Activated CD4-positive, alpha-beta T cell treated with anti-CD3 and anti-CD28 coated beads, Interleukin-2, amount 10 ng/mL, durations not matched to agents 24 days and 14 days (primary cell): ENCODE measurements at regions of chr1 and their contacts with region 1.

Region 1: GRCh38 chr1:94417978-94418663 is at the start of gene ABCD3:
- DNase-seq: peak; percentile 99
- H3K4me3 Mint-ChIP-seq: no peak within 1 kb of the TSS
- H3K27ac Mint-ChIP-seq: peak within 1 kb of the TSS; percentile 81
- H3K4me1 Mint-ChIP-seq: peaks cover 18% of the 10 kb centered on the region
- H3K27me3 Mint-ChIP-seq: peaks cover 15% of the 10 kb centered on the region
- total RNA-seq, gene ABCD3: 29.9 and 31.1 TPM in 2 replicates

Region 2: DNA sequence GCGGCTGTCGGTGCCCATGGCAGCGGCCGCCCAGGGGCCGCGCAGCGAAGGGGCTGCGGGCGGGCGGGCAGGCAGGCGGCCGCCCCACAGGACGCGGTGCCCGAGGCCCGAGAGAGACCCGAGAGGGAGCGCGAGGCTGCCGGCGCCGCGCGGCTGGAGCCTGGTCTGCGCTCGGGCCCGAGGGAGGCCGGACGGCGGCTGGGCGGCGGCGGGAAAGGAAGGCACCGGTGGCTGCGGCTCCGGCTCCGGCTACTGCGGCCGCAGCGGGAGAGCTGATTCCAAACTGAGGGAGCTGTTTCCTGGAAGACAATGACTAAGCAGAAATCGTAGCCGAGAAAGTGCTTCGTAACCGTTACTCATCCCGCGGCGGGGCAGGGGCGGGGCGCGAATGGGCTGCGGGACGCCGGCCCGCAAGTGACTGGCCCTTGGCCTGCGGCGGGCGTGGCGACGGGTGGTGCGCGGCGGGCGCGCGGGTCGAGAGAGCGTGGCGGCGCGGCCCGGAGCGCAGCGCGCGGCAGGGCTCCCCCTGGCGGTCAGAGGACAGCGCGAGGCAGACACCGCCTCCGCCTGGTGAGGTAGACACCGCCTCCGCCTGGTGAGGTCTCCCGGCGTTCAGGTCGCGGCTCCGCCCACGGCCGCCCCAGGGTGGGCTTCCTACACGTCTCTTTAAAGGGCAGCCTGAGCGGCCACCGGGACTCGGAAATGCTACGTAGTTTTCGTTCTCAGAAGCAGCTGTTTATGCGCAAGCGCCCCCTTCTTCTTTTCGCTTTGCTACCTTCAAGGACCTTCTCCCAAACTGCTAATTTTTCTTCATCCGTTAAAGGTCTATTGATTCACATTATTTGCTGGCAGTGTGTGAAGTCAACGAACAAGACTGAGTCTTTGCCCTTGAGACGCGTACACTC is 508.7 kb before region 1 on chr1 and contains the start of gene GCLM:
- intact Hi-C with region 1: loop called (anchors 10 kb)
- DNase-seq: peak; percentile 97
- H3K4me3 Mint-ChIP-seq: peak within 1 kb of the TSS; percentile 87
- H3K27ac Mint-ChIP-seq: peak within 1 kb of the TSS; percentile 93
- H3K4me1 Mint-ChIP-seq: peaks cover 29% of the 10 kb centered on the region
- H3K27me3 Mint-ChIP-seq: peaks cover 20% of the 10 kb centered on the region
- total RNA-seq, gene GCLM: 20.9 and 22.4 TPM in 2 replicates

Region 3: GRCh38 chr1:94160811-94161210 is 257.3 kb before region 1 on chr1:
- intact Hi-C with region 1: no loop called
- DNase-seq: no peak
- H3K4me3 Mint-ChIP-seq: no peak overlapping the region
- H3K27ac Mint-ChIP-seq: no peak overlapping the region
- H3K4me1 Mint-ChIP-seq: no peaks in the 10 kb centered on the region
- H3K27me3 Mint-ChIP-seq: peaks cover 9% of the 10 kb centered on the region

Region 4: DNA sequence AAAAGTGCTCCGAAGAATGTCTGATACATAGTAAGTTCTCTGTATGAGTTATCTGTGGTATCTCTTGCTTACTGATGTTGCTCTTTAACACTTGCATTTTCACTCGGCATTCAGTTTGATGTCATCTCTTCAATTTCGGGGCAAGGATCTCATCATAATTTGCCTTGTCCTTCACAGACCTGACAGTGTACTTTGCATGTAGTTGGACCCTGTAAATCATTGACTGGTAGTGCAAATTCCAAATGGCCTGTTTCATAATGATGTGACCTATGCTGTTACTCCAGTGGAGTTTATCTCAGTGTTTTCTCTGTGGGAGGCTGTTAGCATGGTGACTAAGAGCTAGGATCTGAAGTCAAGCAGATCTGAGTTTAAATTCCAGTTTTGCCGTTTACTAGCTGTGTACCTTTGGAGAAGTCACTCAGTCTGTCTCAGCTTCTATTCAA is 34.1 kb before region 1 on chr1:
- intact Hi-C with region 1: loop called (anchors 1 kb)
- DNase-seq: peak; percentile 65
- H3K4me3 Mint-ChIP-seq: no peak overlapping the region
- H3K27ac Mint-ChIP-seq: peak overlapping the region; percentile 43
- H3K4me1 Mint-ChIP-seq: peaks cover 19% of the 10 kb centered on the region
- H3K27me3 Mint-ChIP-seq: peaks cover 5% of the 10 kb centered on the region

Region 5: DNA sequence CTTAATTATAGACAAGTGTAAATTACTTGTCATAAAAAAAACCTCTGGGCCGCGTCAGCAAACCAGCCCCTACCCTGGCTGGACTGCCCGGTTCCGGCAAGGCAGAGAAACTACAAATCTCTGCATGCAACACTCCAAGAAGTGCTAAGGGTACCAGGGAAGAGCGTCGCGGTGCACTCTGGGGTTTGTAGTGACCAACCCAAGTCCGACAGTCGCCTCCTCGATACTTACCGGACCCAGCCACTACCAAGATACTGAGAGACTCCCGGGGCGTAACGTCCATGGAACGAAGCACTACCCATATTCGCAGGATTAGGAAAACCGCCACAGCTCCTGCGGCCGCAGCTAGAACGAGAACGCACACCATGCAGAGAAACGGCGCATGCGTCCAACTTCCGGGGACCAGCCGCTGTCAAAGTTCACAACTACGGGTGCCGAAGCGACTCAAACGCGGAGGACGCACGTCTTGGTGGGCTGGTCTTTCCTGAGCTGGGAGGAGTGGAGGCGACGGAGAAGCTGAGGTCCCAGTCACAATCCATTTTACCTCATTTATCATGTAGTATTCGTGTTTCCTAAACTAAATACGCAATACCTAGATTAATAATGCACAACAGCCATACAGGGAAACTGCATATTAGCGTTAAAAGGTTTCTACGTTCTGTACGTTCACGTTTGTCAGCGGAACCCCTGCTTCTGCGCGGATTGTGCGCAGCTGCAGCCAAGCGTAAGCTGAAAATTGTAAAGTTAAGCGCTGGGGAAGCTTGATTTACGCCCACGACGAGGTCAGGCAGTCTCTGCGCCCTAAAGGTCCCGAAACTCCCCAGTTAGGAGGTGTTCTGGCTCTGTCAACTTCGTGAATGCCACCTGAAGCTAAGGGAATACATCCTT is 654.7 kb after region 1 on chr1 and contains the start of gene ALG14:
- intact Hi-C with region 1: loop called (anchors 2 kb)
- DNase-seq: peak; percentile 97
- H3K4me3 Mint-ChIP-seq: peak within 1 kb of the TSS; percentile 91
- H3K27ac Mint-ChIP-seq: peak within 1 kb of the TSS; percentile 94
- H3K4me1 Mint-ChIP-seq: peaks cover 19% of the 10 kb centered on the region
- H3K27me3 Mint-ChIP-seq: no peaks in the 10 kb centered on the region
- total RNA-seq, gene ALG14: 1.7 and 2.1 TPM in 2 replicates